ENCODE measurements at regions of chr19 and their contacts with region 1.

Region 1: GRCh38 chr19:45092747-45093678 is at the start of gene PPP1R37:
- DNase-seq: peak; percentile 95
- ATAC-seq: peak; percentile 71
- H3K4me3 Mint-ChIP-seq: peak within 1 kb of the TSS; percentile 89
- H3K27ac Mint-ChIP-seq: peak within 1 kb of the TSS; percentile 97
- H3K4me1 Mint-ChIP-seq: peaks cover 54% of the 10 kb centered on the region
- H3K27me3 Mint-ChIP-seq: no peaks in the 10 kb centered on the region
- total RNA-seq, gene PPP1R37: 12.5 to 14.1 TPM

Region 2: GRCh38 chr19:44752816-44753618 is 340.0 kb before region 1 on chr19:
- CTCF ChIA-PET with region 1: no interaction called
- POLR2A ChIA-PET with region 1: no interaction called
- intact Hi-C with region 1: loop called in 1 of 2 experiments (anchors 2 kb)
- DNase-seq: peak; percentile 98
- ATAC-seq: peak; percentile 79
- H3K4me3 Mint-ChIP-seq: peak overlapping the region; percentile 94
- H3K27ac Mint-ChIP-seq: peak overlapping the region; percentile 97
- H3K4me1 Mint-ChIP-seq: peaks cover 54% of the 10 kb centered on the region
- H3K27me3 Mint-ChIP-seq: no peaks in the 10 kb centered on the region

Region 3: DNA sequence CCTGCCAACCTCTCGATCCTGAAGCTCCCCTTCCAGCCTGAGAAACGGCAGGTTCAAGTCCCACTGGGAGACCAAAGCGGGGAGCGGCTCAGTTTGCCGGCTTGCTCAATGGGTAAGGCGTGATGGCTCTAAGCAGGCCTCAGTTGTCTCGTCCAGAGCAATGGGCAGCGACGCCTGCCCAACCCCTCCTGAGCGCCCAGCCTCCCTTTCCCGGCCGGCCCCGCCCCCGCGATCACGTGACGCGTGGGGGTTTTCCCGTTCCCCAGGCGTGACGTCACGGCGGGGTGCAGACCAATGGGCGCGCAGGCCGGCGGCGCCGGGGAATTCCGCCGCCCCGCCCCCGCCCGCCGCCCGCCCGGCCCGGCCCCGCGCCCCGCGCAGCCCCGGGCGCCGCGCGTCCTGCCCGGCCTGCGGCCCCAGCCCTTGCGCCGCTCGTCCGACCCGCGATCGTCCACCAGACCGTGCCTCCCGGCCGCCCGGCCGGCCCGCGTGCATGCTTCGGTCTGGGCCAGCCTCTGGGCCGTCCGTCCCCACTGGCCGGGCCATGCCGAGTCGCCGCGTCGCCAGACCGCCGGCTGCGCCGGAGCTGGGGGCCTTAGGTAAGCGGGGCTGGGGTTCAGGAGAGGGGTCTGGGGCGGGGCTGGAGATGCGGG is 91.8 kb before region 1 on chr19 and contains the start of gene RELB:
- CTCF ChIA-PET with region 1: no interaction called
- POLR2A ChIA-PET with region 1: no interaction called
- intact Hi-C with region 1: loop called in 1 of 2 experiments (anchors 1 kb)
- DNase-seq: peak; percentile 97
- ATAC-seq: peak; percentile 53
- H3K4me3 Mint-ChIP-seq: peak within 1 kb of the TSS; percentile 94
- H3K27ac Mint-ChIP-seq: peak within 1 kb of the TSS; percentile 97
- H3K4me1 Mint-ChIP-seq: peaks cover 16% of the 10 kb centered on the region
- H3K27me3 Mint-ChIP-seq: no peaks in the 10 kb centered on the region
- total RNA-seq, gene RELB: 43.8 to 51.2 TPM

Region 4: GRCh38 chr19:45079063-45079910 is 13.7 kb before region 1 on chr19 and contains the start of gene GEMIN7:
- CTCF ChIA-PET with region 1: interaction called, 12 read pairs
- POLR2A ChIA-PET with region 1: interaction called, 5 read pairs
- intact Hi-C with region 1: loop called (anchors 1 kb)
- DNase-seq: peak; percentile 90
- ATAC-seq: peak; percentile 65
- H3K4me3 Mint-ChIP-seq: peak within 1 kb of the TSS; percentile 99
- H3K27ac Mint-ChIP-seq: peak within 1 kb of the TSS; percentile 88
- H3K4me1 Mint-ChIP-seq: peaks cover 43% of the 10 kb centered on the region
- H3K27me3 Mint-ChIP-seq: no peaks in the 10 kb centered on the region
- total RNA-seq, gene GEMIN7: 35.4 to 35.5 TPM

Region 5: DNA sequence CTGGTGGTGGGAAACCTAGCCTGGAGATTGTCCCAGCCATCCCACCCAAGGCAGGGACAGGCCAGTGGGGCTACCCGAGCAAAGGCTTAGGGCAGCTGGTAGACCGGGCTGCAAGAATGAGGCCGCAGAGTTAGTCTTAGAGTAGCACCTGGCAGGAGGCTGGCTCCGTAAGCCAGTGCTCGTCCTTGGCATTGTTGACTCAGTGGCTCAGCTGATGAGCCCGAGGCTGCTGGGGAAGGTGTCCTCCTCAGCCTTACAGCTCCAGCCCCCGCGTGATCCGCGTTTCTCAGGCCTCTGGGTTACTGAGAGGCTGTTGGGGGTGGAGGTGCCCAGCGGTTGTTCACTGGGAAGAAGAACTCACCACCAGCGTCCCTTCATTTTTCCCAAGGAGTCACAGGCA is 24.7 kb after region 1 on chr19:
- CTCF ChIA-PET with region 1: interaction called, 4 read pairs
- POLR2A ChIA-PET with region 1: interaction called, 7 read pairs
- intact Hi-C with region 1: loop called in 1 of 2 experiments (anchors 1 kb)
- DNase-seq: peak; percentile 49
- ATAC-seq: peak; percentile 18
- H3K4me3 Mint-ChIP-seq: no peak overlapping the region
- H3K27ac Mint-ChIP-seq: no peak overlapping the region
- H3K4me1 Mint-ChIP-seq: peaks cover 69% of the 10 kb centered on the region
- H3K27me3 Mint-ChIP-seq: no peaks in the 10 kb centered on the region

Region 6: GRCh38 chr19:45250832-45251451 is 157.9 kb after region 1 on chr19 and contains the start of gene MARK4:
- CTCF ChIA-PET with region 1: interaction called, 3 read pairs
- POLR2A ChIA-PET with region 1: no interaction called
- intact Hi-C with region 1: loop called in 1 of 2 experiments (anchors 1 kb)
- DNase-seq: peak; percentile 72
- ATAC-seq: peak; percentile 67
- H3K4me3 Mint-ChIP-seq: peak within 1 kb of the TSS; percentile 77
- H3K27ac Mint-ChIP-seq: peak within 1 kb of the TSS; percentile 76
- H3K4me1 Mint-ChIP-seq: peaks cover 29% of the 10 kb centered on the region
- H3K27me3 Mint-ChIP-seq: peaks cover 2% of the 10 kb centered on the region
- total RNA-seq, gene MARK4: 19.1 to 19.6 TPM

Region 7: DNA sequence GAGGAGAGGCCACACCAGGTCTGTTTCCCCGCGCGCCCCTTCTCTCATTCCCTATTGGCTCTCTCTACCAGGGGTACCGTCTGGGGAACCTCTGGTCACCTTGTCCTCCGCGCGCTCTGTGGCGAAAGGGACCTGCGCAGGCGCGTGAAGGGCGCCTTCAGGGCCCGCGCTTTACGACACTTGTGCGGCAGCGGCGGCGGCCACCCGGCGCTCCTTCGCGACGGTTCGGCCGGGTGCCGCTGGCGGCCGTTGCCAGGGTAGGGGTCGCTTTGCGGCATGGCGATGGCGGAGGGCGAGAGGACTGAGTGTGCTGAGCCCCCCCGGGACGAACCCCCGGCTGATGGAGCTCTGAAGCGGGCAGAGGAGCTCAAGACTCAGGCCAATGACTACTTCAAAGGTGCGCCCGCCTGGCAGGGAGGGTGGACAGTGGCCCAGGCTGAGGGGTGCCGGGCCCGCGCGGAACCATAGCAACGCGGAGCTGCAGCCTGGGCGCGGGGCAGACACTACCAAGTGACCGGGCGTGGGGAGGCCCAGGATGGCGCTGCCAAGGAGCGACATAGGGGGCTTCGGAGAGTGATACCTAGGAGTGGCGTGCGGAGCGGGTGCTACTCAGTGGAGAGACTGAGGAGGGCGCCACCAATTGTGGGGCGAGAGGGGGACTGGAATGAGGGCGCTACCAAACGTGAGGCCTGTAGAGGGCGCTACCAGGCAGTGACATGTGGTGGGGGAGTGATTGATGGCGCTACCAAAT is 1254.0 kb after region 1 on chr19 and contains the start of gene PPP5C:
- CTCF ChIA-PET with region 1: no interaction called
- POLR2A ChIA-PET with region 1: no interaction called
- intact Hi-C with region 1: loop called in 1 of 2 experiments (anchors 5 kb)
- DNase-seq: peak; percentile 94
- ATAC-seq: peak; percentile 74
- H3K4me3 Mint-ChIP-seq: peak within 1 kb of the TSS; percentile 90
- H3K27ac Mint-ChIP-seq: peak within 1 kb of the TSS; percentile 91
- H3K4me1 Mint-ChIP-seq: peaks cover 41% of the 10 kb centered on the region
- H3K27me3 Mint-ChIP-seq: no peaks in the 10 kb centered on the region
- total RNA-seq, gene PPP5C: 100.0 to 129 TPM

Measured in activated CD4-positive, alpha-beta T cell treated with anti-CD3 and anti-CD28 coated beads for 36 hours (primary cell).